Activated B cell treated with CpG ODN at 0.5 μM for 24 hours (primary cell): ENCODE measurements at regions of chr11 and their contacts with region 1.

Region 1: GRCh38 chr11:74018331-74019005 is 9.6 kb upstream of the UCP3 start:
- DNase-seq: no peak
- ATAC-seq: no peak
- H3K4me3 Mint-ChIP-seq: no peak overlapping the region
- H3K27ac Mint-ChIP-seq: peak overlapping the region; percentile 36
- H3K4me1 Mint-ChIP-seq: peaks cover 33% of the 10 kb centered on the region
- H3K27me3 Mint-ChIP-seq: no peaks in the 10 kb centered on the region
- CTCF ChIP-seq: no peak

Region 2: DNA sequence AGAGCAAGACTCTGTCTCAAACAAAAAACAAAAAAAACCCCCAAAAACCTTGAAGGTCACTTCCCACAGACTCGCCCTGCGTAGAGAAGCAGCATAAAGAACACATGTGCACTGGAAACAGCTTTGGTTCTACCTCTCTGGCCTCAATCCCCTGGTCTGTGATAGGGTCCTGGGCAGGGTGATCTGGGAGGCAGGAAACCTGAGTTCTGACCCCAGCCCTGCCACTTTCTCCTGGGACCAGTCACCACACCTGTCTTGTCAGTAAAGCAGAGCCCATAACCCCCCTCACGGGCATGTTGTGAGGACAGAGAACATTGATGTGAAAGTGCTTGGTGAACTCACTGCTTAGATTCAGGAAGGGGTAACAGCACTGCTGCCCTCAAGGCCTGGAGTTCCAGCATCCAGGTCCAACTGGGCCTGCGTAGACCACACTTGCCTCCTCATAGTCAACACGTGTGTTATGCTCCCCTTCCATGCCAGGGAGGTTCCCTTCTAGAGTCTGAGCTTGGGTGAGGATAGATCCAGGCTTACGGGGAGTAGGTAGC is 47.2 kb before region 1 on chr11:
- CTCF ChIA-PET with region 1: interaction called, 3 read pairs
- POLR2A ChIA-PET with region 1: interaction called, 22 read pairs
- intact Hi-C with region 1: loop called (anchors 2 kb)
- DNase-seq: no peak
- ATAC-seq: peak; percentile 29
- H3K4me3 Mint-ChIP-seq: peak overlapping the region; percentile 38
- H3K27ac Mint-ChIP-seq: peak overlapping the region; percentile 100
- H3K4me1 Mint-ChIP-seq: peaks cover 88% of the 10 kb centered on the region
- H3K27me3 Mint-ChIP-seq: no peaks in the 10 kb centered on the region
- CTCF ChIP-seq: no peak

Region 3: DNA sequence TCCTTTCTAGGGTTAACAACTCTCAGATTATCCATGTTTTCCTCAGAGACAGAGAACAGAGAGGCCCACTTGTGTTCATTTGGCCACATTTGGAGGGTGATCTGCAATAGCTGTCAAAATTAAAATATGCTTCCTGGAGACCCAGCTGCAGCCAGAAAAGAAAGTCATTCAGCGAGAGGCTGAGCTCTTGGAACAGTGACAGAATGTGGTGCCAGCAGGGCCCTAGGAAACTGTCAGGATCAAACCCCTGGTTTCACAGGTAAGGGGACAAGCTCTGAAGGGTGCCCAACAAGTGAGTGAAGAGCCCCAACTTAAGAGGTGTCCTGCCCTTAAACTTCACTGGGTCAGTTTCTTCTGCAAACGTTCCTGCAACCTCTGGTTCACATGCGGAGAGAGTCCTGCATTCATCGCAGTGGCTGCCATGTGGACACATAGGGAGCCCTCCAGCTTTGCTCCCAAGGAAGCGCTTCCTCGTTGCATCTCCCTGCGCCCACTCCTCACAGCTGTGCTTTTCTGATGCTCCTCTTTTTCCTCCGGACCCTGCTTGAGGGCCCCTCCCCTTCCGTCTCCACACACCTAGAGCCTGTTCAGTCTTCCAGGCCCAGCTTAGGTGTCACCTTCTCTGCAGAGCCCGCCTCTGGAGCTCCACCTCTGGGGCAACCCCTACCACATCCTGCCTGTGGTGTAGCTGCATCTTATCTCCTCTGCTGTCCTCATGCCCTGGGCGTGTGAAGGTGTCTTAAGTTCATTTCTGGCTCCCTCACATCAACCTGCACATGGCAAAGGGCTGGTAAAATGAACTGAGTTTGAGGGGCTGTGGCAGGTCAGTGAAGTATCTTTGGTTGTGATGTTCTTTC is 13.5 kb before region 1 on chr11:
- CTCF ChIA-PET with region 1: interaction called, 5 read pairs
- POLR2A ChIA-PET with region 1: interaction called, 5 read pairs
- intact Hi-C with region 1: loop called (anchors 2 kb)
- DNase-seq: no peak
- ATAC-seq: peak; percentile 98
- H3K4me3 Mint-ChIP-seq: peak overlapping the region; percentile 8
- H3K27ac Mint-ChIP-seq: peak overlapping the region; percentile 75
- H3K4me1 Mint-ChIP-seq: peaks cover 39% of the 10 kb centered on the region
- H3K27me3 Mint-ChIP-seq: no peaks in the 10 kb centered on the region
- CTCF ChIP-seq: no peak